Mucosa of descending colon (tissue), 3 donors: ENCODE measurements at regions of chr4 and their contacts with region 1.

Region 1: DNA sequence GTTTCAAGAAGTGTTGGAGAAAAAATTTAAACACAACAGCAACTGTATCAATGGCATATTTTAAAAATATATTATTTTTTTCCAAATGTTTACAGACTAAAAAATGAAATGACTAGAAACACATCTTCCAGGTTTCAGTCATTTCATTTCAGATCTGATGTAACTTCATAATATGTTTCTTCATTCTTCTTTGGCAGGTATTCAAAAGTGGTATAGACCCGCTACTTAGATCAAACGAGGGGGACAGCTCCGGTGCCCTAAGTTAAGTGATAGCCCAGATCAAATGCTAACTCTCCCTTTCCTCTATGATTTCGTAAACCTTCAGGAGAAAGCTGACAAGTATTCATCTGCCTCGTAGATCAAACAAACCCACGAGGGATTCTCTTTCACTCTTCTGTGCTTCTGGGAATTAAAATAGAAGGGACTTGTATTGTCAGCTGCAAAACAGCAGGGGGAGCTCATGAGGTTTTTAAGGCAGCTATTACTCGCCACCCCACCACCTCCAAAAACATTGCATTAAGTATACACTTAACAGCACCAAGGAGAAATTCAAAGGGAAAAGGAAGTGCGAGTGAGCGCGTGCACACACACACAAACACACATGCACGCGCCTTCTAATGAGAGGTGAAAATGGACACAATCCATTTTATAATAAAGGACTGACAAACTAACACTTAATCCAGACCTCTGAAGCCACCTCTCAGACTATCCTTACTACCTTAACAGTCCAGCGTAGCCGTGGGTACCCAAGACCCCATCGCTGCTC is 21.4 kb downstream of the HELT start:
- DNase-seq: peak in 1 of 3 donors; percentile 62
- ATAC-seq: peak; percentile 69
- H3K4me3 ChIP-seq: no peak overlapping the region
- H3K4me1 ChIP-seq: no peaks in the 10 kb centered on the region
- CTCF ChIP-seq: peak; percentile 47

Region 2: GRCh38 chr4:184668511-184669114 is 371.1 kb before region 1 on chr4:
- intact Hi-C with region 1: no loop called
- DNase-seq: no peak
- ATAC-seq: peak; percentile 21
- H3K4me3 ChIP-seq: no peak overlapping the region
- H3K4me1 ChIP-seq: peaks cover 6% of the 10 kb centered on the region
- CTCF ChIP-seq: no peak

Region 3: GRCh38 chr4:184968784-184969201 is 70.9 kb before region 1 on chr4:
- intact Hi-C with region 1: no loop called
- DNase-seq: peak; percentile 88 to 93 (median 91)
- ATAC-seq: peak; percentile 100
- H3K4me3 ChIP-seq: no peak overlapping the region
- H3K4me1 ChIP-seq: peaks cover 8% of the 10 kb centered on the region
- CTCF ChIP-seq: no peak

Region 4: GRCh38 chr4:185134307-185134869 is 94.7 kb after region 1 on chr4:
- intact Hi-C with region 1: loop called (anchors 5 to 10 kb)
- DNase-seq: no peak
- ATAC-seq: peak; percentile 66
- H3K4me3 ChIP-seq: no peak overlapping the region
- H3K4me1 ChIP-seq: no peaks in the 10 kb centered on the region
- CTCF ChIP-seq: peak; percentile 52